Activated CD8-positive, alpha-beta T cell treated with anti-CD3 and anti-CD28 coated beads for 36 hours (primary cell): ENCODE measurements at regions of chr10 and their contacts with region 1.

Region 1: GRCh38 chr10:43606322-43607198 is at the start of gene ZNF485:
- DNase-seq: peak; percentile 78
- ATAC-seq: peak; percentile 92
- H3K4me3 Mint-ChIP-seq: peak within 1 kb of the TSS; percentile 81
- H3K27ac Mint-ChIP-seq: peak within 1 kb of the TSS; percentile 86
- H3K4me1 Mint-ChIP-seq: peaks cover 35% of the 10 kb centered on the region
- H3K27me3 Mint-ChIP-seq: no peaks in the 10 kb centered on the region
- CTCF ChIP-seq: no peak
- total RNA-seq, gene ZNF485: 8.1 to 8.7 TPM

Region 2: DNA sequence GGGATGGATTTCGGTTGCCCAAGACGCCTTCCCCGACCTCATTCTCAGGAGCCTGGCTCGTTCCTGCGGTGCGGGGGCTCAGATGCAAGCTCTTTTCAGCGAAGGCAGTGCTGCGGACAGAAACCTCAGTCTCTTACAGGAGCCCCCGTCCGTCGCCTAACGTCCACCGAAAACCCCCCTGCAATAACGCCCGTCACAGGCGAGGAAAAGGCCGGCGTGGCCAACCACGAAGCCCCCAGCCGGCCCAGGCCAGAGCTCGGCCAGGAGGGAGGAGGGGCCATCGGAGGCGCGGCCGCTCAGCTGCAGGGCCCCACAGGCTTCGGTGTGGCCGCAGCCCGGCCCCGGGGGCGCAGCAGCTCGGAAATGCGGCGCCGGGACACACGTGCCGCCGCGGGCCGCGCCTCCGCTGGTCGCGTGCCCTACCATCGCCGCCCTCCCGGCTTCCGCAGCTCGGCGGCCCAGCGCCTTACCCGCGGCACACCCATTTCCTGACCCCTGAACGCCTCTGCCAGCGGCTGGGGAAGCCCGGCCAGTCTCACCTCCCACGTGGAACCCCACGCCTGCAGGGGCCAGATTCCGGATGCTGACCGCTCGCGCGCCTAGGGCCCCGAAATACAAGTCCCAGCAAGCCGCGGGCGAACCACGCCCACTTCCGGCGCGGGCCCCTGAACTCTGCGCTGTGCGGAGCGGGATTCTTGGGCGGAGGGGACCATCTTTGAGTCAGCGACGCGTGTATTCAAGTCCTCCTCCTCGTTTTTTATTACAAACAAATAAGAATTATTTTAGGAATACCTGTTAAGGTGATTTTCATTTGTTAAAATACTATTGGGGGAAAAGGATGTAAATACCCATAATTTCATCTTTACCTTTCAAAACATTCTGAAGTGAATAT is 32.3 kb before region 1 on chr10 and contains the start of gene ZNF239:
- CTCF ChIA-PET with region 1: interaction called, 5 read pairs
- POLR2A ChIA-PET with region 1: interaction called, 6 read pairs
- intact Hi-C with region 1: loop called (anchors 5 kb)
- DNase-seq: peak; percentile 92
- ATAC-seq: peak; percentile 95
- H3K4me3 Mint-ChIP-seq: peak within 1 kb of the TSS; percentile 63
- H3K27ac Mint-ChIP-seq: peak within 1 kb of the TSS; percentile 65
- H3K4me1 Mint-ChIP-seq: peaks cover 52% of the 10 kb centered on the region
- H3K27me3 Mint-ChIP-seq: no peaks in the 10 kb centered on the region
- CTCF ChIP-seq: no peak
- total RNA-seq, gene ZNF239: 0.56 to 1.3 TPM

Region 3: DNA sequence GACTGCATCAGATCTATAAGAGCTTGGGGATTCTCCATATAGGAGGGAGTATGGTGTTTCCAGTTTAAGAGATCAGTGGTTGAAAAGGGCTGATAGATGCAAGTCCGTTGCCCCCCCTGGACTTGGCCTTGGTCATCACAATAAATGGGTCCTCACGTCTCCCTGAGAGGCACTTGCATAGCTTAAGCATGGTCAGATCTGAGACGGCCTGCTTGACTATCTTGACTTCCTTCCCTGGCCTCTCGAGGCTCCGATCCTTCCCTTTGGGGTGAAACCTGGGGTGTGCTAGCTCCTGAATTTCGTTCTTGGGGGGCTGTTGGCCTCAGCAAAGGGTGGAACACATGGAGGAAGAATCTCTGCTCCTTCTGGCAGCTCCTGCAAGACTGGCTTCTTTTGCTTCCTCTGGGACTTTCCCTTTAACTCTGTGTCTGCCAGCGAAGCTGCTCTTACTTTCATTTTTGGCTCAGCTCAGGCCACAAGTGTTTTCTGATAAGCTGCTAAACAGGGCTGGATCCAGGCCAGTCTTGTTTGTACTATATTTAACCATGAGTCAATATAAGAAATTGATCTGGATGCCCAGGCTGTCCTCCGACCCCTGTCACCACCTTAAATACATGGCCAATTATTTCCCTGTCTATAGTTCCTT is 11.5 kb before region 1 on chr10:
- CTCF ChIA-PET with region 1: no interaction called
- POLR2A ChIA-PET with region 1: interaction called, 11 read pairs
- intact Hi-C with region 1: no loop called
- DNase-seq: peak; percentile 70
- ATAC-seq: peak; percentile 84
- H3K4me3 Mint-ChIP-seq: peak overlapping the region; percentile 48
- H3K27ac Mint-ChIP-seq: peak overlapping the region; percentile 66
- H3K4me1 Mint-ChIP-seq: peaks cover 26% of the 10 kb centered on the region
- H3K27me3 Mint-ChIP-seq: no peaks in the 10 kb centered on the region
- CTCF ChIP-seq: no peak

Region 4: DNA sequence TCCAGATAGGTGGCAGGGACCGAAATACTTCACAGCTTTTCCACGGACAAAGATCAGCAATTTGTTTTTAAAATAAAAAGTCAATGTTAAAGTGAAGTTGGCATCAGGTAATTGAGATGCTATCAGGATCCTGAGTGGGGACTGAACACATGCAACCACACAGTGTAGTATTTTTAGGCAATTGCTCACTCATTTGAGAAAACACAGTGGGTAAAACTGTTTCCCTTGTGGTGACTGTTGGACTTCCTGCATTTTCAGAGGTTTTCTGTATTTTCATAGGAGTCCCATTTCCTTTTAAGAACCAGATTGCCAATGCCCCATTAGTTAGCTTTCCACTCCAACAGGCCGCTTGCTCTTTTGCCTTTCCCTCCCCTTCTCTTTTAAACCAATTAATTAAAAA is 201.6 kb after region 1 on chr10:
- CTCF ChIA-PET with region 1: no interaction called
- POLR2A ChIA-PET with region 1: no interaction called
- intact Hi-C with region 1: no loop called
- DNase-seq: no peak
- ATAC-seq: peak; percentile 55
- H3K4me3 Mint-ChIP-seq: no peak overlapping the region
- H3K27ac Mint-ChIP-seq: no peak overlapping the region
- H3K4me1 Mint-ChIP-seq: peaks cover 36% of the 10 kb centered on the region
- H3K27me3 Mint-ChIP-seq: no peaks in the 10 kb centered on the region
- CTCF ChIP-seq: no peak